Common myeloid progenitor, CD34-positive (primary cell): ENCODE measurements at regions of chr11 and their contacts with region 1.

Region 1: DNA sequence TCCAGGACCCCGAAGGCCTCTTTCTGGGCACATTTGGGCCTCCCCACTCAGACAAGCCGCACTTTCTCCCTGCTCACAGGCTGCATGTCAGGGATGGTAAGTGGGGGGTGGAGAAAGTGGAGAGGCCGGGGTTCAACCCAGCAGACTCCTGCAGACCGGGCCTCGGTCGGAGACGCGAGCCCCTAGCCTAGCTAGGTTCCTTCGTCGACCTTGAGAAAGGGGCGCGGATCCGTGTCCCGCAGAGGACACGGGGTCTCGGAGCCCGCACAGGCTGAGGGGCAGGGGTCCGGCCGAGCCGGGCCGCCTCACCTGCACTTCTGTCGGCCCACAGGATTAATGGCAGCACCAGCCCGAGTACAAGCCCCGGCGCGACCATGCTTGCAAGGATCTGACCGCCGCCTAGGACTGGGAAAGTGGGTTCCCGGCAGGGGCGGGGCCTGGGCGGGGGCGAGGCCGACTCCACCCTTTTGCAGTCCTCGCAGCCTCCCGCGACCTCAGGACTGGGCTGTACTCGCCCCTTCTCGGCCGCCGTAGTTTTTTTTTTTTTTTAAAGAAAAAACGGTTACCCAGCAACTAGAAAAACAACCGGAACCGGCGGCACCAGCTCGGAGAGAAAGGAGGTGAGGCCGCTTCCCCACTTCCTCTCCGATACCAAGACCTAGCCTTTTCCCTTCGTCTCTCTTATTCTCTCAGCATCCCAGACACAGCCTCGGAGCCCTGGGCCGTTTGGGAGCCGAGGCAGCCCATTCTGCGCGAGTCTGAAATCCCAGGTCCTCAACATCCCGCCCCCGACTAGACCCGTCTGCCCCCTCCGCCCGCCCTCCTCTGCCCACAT is at the starts of genes SIAE and SPA17:
- DNase-seq: peak; percentile 97 to 98 (median 97)
- H3K4me3 ChIP-seq: peak within 1 kb of the TSS; percentile 66 to 92 (median 82)
- H3K27ac ChIP-seq: peak within 1 kb of the TSS; percentile 73 to 91
- H3K4me1 ChIP-seq: peaks cover 28 to 53% (median 45%) of the 10 kb centered on the region in 4 experiments
- H3K27me3 ChIP-seq: no peaks in the 10 kb centered on the region

Region 2: GRCh38 chr11:124746621-124747243 is 73.2 kb after region 1 on chr11:
- CTCF ChIA-PET with region 1: interaction called, 35 read pairs
- POLR2A ChIA-PET with region 1: interaction called, 3 read pairs
- DNase-seq: peak; percentile 87 to 91 (median 88)
- H3K4me3 ChIP-seq: peak overlapping the region; percentile 37 to 91 (median 81)
- H3K27ac ChIP-seq: peak overlapping the region in 1 of 2 experiments; percentile 36
- H3K4me1 ChIP-seq: peaks cover 0 to 29% (median 13%) of the 10 kb centered on the region in 4 experiments
- H3K27me3 ChIP-seq: no peaks in the 10 kb centered on the region

Region 3: DNA sequence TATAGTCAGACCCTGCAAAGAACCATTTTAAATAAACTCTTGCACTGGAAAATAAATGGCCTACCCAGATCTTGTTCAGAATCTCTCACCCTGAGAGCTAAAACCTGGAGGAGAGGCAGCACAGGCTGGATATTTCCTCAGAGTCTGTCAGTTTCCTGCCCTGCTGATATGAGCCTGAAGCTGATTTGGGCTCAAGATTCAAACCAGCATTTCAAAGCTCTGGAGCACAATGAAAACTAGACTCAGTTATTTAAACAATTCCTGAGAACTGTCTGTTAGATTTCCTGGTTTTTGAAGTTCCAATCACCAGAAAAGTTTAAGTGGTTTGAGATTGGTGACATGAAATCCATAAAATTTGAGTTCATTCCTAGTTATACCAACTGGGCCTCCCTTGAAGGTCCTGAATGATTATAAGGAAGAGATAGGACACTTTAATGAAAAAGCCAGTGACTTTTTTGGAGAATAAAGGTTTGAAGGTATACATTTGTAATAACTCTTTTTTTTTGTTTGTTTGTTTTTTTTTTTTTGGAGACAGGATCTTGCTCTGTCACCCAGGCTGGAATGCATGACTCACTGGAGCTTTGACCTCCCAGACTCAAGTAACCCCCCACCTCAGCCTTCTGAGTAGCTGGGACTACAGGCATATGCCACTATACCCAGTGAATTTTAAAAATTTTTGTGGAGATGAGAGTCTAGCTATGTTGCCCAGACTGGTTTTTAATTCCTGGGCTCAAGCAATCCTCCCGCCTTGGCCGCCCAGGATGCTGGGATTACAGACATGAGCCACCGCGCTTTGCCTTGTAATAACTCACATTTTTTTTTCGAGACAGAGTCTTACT is 96.5 kb after region 1 on chr11:
- CTCF ChIA-PET with region 1: interaction called, 139 read pairs
- POLR2A ChIA-PET with region 1: no interaction called
- DNase-seq: no peak
- H3K4me3 ChIP-seq: no peak overlapping the region
- H3K27ac ChIP-seq: no peak overlapping the region
- H3K4me1 ChIP-seq: no peaks in the 10 kb centered on the region
- H3K27me3 ChIP-seq: peaks cover 0 to 1% (median 0%) of the 10 kb centered on the region in 5 experiments

Region 4: GRCh38 chr11:124793466-124794278 is 120.1 kb after region 1 on chr11:
- CTCF ChIA-PET with region 1: interaction called, 56 read pairs
- POLR2A ChIA-PET with region 1: interaction called, 3 read pairs
- DNase-seq: peak; percentile 66 to 81 (median 76)
- H3K4me3 ChIP-seq: no peak overlapping the region
- H3K27ac ChIP-seq: no peak overlapping the region
- H3K4me1 ChIP-seq: peaks cover 0 to 3% (median 2%) of the 10 kb centered on the region in 4 experiments
- H3K27me3 ChIP-seq: peaks cover 0 to 8% (median 0%) of the 10 kb centered on the region in 5 experiments

Region 5: DNA sequence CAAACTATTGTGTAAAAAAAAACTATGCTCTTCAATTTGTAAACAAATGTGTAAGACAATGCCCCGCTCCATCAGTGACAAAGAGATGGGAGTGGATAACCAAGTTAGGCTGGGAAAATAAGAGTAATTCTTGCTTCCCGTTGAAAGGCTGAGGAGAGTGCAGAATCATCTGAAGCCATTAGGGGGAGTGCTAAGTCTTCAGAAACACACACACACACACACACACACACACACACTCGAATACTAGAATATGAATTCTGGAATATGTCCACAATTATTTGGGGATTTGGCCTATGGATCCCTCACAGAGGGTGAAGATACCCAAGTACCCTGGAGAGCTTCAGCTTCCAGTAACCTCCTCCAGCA is 163.9 kb after region 1 on chr11:
- CTCF ChIA-PET with region 1: interaction called, 16 read pairs
- POLR2A ChIA-PET with region 1: no interaction called
- DNase-seq: peak; percentile 83 to 87 (median 85)
- H3K4me3 ChIP-seq: no peak overlapping the region
- H3K27ac ChIP-seq: no peak overlapping the region
- H3K4me1 ChIP-seq: peaks cover 0 to 21% (median 16%) of the 10 kb centered on the region in 4 experiments
- H3K27me3 ChIP-seq: peaks cover 30 to 52% (median 37%) of the 10 kb centered on the region in 5 experiments

Region 6: GRCh38 chr11:125517116-125517804 is 843.7 kb after region 1 on chr11:
- CTCF ChIA-PET with region 1: no interaction called
- POLR2A ChIA-PET with region 1: no interaction called
- DNase-seq: peak; percentile 26 to 62 (median 57)
- H3K4me3 ChIP-seq: peak overlapping the region in 2 of 7 experiments; percentile 1 to 15
- H3K27ac ChIP-seq: no peak overlapping the region
- H3K4me1 ChIP-seq: peaks cover 5 to 36% (median 15%) of the 10 kb centered on the region in 4 experiments
- H3K27me3 ChIP-seq: peaks cover 0 to 24% (median 0%) of the 10 kb centered on the region in 5 experiments